ENCODE measurements at regions of chr7 and their contacts with region 1.

Region 1: DNA sequence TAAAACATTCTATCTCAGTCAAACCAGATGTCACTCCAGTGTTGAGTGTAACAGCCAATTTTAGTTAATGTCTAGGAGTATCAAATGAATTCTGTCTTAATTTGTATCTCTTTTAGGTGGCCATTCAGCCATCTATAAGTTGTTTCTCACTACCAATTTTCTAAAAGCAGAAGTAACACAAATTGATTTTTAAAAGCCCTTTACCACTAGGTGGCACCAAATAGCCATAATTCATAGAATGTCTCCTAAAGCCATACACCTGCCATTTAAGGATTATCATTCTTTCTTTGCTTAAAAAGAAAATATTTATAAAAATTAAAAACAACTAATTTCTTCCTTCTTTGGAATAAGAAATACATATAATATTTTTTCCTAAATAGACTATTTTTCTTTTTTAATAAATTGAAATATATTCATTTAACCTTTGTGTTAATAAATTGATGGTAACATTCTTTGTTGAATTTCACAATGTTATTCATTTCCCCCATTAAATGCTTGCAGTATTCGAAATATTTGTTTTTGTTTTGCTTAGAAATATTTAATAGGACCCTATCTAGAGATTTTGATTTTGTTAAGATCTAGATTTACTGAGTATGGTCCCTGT is 107.8 kb upstream of the PPP1R3A start:
- DNase-seq: peak in 4 of 5 donors; percentile 56 to 64 (median 58)
- H3K4me3 ChIP-seq: no peak overlapping the region
- H3K4me3 Mint-ChIP-seq: no peak overlapping the region
- H3K27ac ChIP-seq: no peak overlapping the region
- H3K27ac Mint-ChIP-seq: no peak overlapping the region
- H3K4me1 ChIP-seq: no peaks in the 10 kb centered on the region
- H3K4me1 Mint-ChIP-seq: no peaks in the 10 kb centered on the region
- H3K27me3 ChIP-seq: no peaks in the 10 kb centered on the region
- H3K27me3 Mint-ChIP-seq: peaks cover 1 to 4% of the 10 kb centered on the region in 2 donors

Region 2: DNA sequence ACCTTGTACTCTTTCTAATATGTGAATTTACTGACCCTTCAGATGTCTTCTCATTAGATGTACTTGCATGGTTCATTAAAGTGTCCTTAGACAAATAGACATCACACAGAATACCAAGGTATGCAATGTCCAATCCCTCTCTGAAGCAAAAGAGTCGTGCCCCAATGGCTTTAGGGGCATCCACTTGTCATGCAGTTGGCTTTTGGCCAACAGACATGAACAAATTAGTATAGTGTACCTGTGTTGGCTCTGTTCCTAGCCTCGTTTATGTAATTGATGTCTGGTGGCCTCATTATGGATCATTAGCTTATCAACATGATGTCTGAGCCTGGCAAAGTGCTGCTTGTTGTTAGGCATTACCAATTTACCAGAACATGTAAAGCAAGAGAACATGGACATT is 343.6 kb after region 1 on chr7:
- CTCF ChIA-PET with region 1: no interaction called
- POLR2A ChIA-PET with region 1: no interaction called
- intact Hi-C with region 1: no loop called
- DNase-seq: no peak
- H3K4me3 ChIP-seq: no peak overlapping the region
- H3K4me3 Mint-ChIP-seq: no peak overlapping the region
- H3K27ac ChIP-seq: no peak overlapping the region
- H3K27ac Mint-ChIP-seq: no peak overlapping the region
- H3K4me1 ChIP-seq: no peaks in the 10 kb centered on the region
- H3K4me1 Mint-ChIP-seq: no peaks in the 10 kb centered on the region
- H3K27me3 ChIP-seq: no peaks in the 10 kb centered on the region
- H3K27me3 Mint-ChIP-seq: no peaks in the 10 kb centered on the region

Region 3: DNA sequence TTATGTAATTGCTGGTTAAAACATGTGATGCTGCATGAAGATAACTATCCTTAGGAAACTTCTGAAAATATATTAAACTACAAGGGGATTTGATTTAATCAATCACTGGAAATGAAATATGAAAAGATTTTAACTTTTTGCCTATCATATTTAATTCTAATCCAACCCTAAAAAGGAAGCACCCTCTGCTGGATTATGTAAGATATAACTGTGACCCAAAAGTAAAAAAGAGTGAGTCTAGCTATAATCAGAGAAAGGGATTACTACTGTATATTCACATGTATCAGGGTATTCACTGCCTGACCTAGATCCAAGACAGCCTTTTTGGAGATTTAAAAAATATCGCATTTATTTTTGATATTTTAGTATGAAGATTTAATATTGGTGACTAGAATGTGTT is 1190.8 kb after region 1 on chr7:
- CTCF ChIA-PET with region 1: no interaction called
- POLR2A ChIA-PET with region 1: no interaction called
- intact Hi-C with region 1: loop called (anchors 5 kb)
- DNase-seq: peak in 4 of 5 donors; percentile 22 to 29 (median 26)
- H3K4me3 ChIP-seq: no peak overlapping the region
- H3K4me3 Mint-ChIP-seq: no peak overlapping the region
- H3K27ac ChIP-seq: no peak overlapping the region
- H3K27ac Mint-ChIP-seq: peak overlapping the region in 1 of 7 donors; percentile 10
- H3K4me1 ChIP-seq: peaks cover 15% of the 10 kb centered on the region
- H3K4me1 Mint-ChIP-seq: peaks cover 12 to 18% (median 14%) of the 10 kb centered on the region in 4 donors
- H3K27me3 ChIP-seq: no peaks in the 10 kb centered on the region
- H3K27me3 Mint-ChIP-seq: peaks cover 0 to 2% of the 10 kb centered on the region in 2 donors

Region 4: DNA sequence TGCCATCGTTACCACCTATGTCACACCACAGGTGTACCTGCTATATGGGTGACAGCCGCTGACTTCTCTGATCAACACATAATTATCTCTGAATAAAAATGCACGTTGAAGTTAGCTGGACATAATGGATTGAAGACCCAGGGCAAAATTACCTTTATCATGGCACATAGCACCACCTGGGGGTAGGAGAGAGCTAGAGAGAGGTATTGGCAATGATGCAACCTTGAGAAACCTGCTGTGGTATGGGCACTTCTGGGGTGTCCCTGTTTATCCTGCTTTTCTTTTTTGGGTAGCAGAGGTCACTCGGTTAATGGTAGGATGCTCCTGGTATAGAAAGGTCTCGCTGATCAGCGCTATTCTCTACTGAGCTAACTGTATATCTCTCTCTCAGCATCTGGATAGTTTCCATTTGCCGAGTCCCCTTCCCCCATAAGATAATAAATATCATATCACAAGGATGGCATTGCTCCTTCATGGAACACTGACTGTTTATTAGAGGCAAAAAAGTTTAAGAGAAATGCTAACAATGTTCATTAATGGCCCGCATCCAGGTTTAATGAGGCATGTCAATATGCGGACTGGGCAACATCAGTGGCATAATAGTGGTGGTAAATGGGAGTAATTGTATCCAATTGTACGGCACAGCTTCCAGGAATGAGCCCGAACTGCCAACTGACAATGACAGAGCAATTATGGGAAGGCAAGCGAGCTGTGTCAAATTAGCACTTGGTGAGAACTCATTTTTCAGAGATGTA is 1680.8 kb after region 1 on chr7:
- CTCF ChIA-PET with region 1: no interaction called
- POLR2A ChIA-PET with region 1: no interaction called
- intact Hi-C with region 1: loop called (anchors 10 kb)
- DNase-seq: no peak
- H3K4me3 ChIP-seq: no peak overlapping the region
- H3K4me3 Mint-ChIP-seq: no peak overlapping the region
- H3K27ac ChIP-seq: no peak overlapping the region
- H3K27ac Mint-ChIP-seq: no peak overlapping the region
- H3K4me1 ChIP-seq: no peaks in the 10 kb centered on the region
- H3K4me1 Mint-ChIP-seq: peaks cover 0 to 1% (median under 1%) of the 10 kb centered on the region in 4 donors
- H3K27me3 ChIP-seq: no peaks in the 10 kb centered on the region
- H3K27me3 Mint-ChIP-seq: no peaks in the 10 kb centered on the region

Region 5: DNA sequence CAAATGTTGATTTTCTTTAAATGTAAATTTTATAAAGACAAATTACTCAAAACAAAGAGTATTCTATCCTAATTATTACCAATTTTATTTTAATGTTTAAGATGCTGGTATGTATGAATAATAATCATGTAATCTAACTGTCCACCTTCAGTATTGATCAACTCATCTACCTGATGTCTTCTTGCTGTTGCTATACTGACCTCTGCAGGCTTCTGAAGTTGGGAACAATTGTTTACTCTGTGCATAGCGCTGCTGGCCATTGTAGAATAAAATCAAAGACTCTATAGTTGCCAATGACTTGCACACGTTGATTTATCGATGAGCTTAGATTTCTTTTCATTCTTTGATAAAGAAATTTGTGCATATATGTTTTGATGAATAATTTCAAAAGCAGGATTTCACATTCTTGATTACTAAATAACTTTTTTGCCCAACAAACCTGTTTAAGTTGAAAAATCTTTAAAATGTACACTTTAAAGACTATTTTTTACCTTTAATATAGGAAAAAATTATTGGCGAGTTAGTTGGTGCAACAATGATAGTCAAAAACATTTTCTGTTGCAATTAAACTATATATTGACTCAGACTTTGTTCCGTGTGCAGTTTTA is 1721.6 kb after region 1 on chr7:
- CTCF ChIA-PET with region 1: interaction called, 3 read pairs
- POLR2A ChIA-PET with region 1: no interaction called
- intact Hi-C with region 1: loop called (anchors 2 kb)
- DNase-seq: peak in 1 of 5 donors; percentile 12
- H3K4me3 ChIP-seq: no peak overlapping the region
- H3K4me3 Mint-ChIP-seq: no peak overlapping the region
- H3K27ac ChIP-seq: no peak overlapping the region
- H3K27ac Mint-ChIP-seq: no peak overlapping the region
- H3K4me1 ChIP-seq: no peaks in the 10 kb centered on the region
- H3K4me1 Mint-ChIP-seq: peaks cover 0 to 2% (median 0%) of the 10 kb centered on the region in 4 donors
- H3K27me3 ChIP-seq: no peaks in the 10 kb centered on the region
- H3K27me3 Mint-ChIP-seq: peaks cover 0 to 3% of the 10 kb centered on the region in 2 donors

Region 6: DNA sequence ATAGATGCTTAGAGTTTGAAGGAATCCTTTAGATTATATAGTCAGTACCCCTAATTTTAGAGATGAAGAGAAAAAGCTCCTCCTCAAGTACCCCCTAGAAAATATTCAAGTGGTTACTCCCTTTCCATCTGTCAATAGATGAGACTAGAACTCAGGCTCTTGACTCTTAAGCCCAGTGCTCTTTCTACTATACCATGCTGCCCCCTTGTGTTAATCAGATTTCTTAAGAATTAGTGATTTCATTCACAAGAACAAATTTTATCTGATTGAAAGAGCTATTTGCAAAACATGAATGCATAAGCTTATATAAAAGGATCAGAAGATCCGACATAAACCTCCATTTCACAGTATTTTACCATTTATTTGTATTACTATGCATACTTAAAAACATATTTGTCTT is 1824.7 kb after region 1 on chr7:
- CTCF ChIA-PET with region 1: interaction called, 23 read pairs
- POLR2A ChIA-PET with region 1: no interaction called
- intact Hi-C with region 1: no loop called
- DNase-seq: peak in 4 of 5 donors; percentile 18 to 31 (median 28)
- H3K4me3 ChIP-seq: no peak overlapping the region
- H3K4me3 Mint-ChIP-seq: no peak overlapping the region
- H3K27ac ChIP-seq: no peak overlapping the region
- H3K27ac Mint-ChIP-seq: no peak overlapping the region
- H3K4me1 ChIP-seq: no peaks in the 10 kb centered on the region
- H3K4me1 Mint-ChIP-seq: peaks cover 0 to 2% (median 0%) of the 10 kb centered on the region in 4 donors
- H3K27me3 ChIP-seq: no peaks in the 10 kb centered on the region
- H3K27me3 Mint-ChIP-seq: peaks cover 2 to 6% of the 10 kb centered on the region in 2 donors

Region 7: DNA sequence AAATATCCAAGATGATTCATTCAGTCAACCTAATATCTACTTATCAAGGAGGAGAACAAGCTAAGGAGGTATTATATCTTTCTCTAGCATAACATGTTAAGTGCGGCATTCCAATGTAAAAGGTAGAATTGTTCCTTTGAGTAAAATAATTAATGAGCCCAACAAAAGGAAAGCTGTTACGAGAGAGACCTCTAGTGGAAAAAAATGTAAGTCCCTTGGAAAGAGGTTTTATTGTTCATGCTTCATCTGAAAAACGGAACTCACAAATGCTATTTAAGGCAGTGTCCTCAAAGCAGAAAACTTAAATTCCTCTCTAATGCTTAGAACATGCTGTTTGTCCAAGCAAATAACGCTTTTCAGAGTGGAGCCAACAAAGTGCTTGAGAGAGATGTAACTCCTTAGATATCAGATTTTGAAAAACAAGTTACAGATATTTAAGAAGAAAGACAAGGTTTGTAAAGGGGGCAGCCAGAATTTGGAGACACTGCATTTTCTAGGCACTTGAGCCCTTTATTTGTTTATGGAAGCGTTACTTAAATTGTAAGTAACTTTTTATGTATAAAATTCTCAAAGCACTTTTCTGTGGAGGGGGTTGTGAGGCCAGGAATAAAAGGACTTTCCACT is 1884.1 kb after region 1 on chr7:
- CTCF ChIA-PET with region 1: interaction called, 3 read pairs
- POLR2A ChIA-PET with region 1: no interaction called
- intact Hi-C with region 1: loop called (anchors 1 kb)
- DNase-seq: peak in 4 of 5 donors; percentile 10 to 13 (median 12)
- H3K4me3 ChIP-seq: no peak overlapping the region
- H3K4me3 Mint-ChIP-seq: no peak overlapping the region
- H3K27ac ChIP-seq: no peak overlapping the region
- H3K27ac Mint-ChIP-seq: no peak overlapping the region
- H3K4me1 ChIP-seq: no peaks in the 10 kb centered on the region
- H3K4me1 Mint-ChIP-seq: no peaks in the 10 kb centered on the region
- H3K27me3 ChIP-seq: no peaks in the 10 kb centered on the region
- H3K27me3 Mint-ChIP-seq: peaks cover 2 to 3% of the 10 kb centered on the region in 2 donors

Measured in CD4-positive, alpha-beta memory T cell (primary cell).